ENCODE measurements at regions of chrX and their contacts with region 1.

Region 1: GRCh38 chrX:47497273-47497672 is 14.3 kb upstream of the ZNF41 start:
- DNase-seq: no peak
- ATAC-seq: no peak
- H3K4me3 ChIP-seq: no peak overlapping the region
- H3K4me3 Mint-ChIP-seq: no peak overlapping the region
- H3K27ac ChIP-seq: no peak overlapping the region
- H3K27ac Mint-ChIP-seq: no peak overlapping the region
- H3K4me1 ChIP-seq: peaks cover 9 to 16% of the 10 kb centered on the region in 2 donors
- H3K4me1 Mint-ChIP-seq: peaks cover 18% of the 10 kb centered on the region
- H3K27me3 ChIP-seq: no peaks in the 10 kb centered on the region
- H3K27me3 Mint-ChIP-seq: no peaks in the 10 kb centered on the region
- CTCF ChIP-seq: no peak

Region 2: DNA sequence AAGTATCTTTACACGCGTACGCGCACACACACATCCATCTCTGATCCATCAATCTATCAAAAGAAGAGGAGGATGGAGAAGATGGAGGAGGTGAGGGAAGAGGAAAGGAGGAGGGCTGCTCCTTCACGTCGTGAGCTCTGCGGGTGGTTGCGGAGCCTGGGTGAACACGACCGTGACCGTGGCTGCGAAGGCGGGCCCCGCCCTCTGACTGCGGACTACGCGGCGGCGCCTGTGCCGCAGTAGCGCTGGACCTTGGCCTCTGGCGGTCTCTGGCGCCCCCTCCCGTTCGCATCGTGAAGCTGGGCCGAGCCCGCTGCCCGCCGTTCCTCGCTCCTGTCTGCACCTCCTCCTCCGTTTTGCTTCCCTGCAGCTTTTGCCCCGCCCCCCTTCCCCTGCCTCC is 26.0 kb after region 1 on chrX:
- CTCF ChIA-PET with region 1: interaction called, 26 read pairs
- POLR2A ChIA-PET with region 1: interaction called, 4 read pairs
- intact Hi-C with region 1: loop called (anchors 1 kb)
- DNase-seq: peak; percentile 87
- ATAC-seq: peak; percentile 99
- H3K4me3 ChIP-seq: peak overlapping the region in 4 of 5 experiments; percentile 51 to 60 (median 57)
- H3K4me3 Mint-ChIP-seq: peak overlapping the region; percentile 71
- H3K27ac ChIP-seq: no peak overlapping the region
- H3K27ac Mint-ChIP-seq: peak overlapping the region; percentile 70
- H3K4me1 ChIP-seq: peaks cover 0 to 8% of the 10 kb centered on the region in 2 donors
- H3K4me1 Mint-ChIP-seq: peaks cover 5% of the 10 kb centered on the region
- H3K27me3 ChIP-seq: no peaks in the 10 kb centered on the region
- H3K27me3 Mint-ChIP-seq: no peaks in the 10 kb centered on the region
- CTCF ChIP-seq: peak; percentile 78

Region 3: DNA sequence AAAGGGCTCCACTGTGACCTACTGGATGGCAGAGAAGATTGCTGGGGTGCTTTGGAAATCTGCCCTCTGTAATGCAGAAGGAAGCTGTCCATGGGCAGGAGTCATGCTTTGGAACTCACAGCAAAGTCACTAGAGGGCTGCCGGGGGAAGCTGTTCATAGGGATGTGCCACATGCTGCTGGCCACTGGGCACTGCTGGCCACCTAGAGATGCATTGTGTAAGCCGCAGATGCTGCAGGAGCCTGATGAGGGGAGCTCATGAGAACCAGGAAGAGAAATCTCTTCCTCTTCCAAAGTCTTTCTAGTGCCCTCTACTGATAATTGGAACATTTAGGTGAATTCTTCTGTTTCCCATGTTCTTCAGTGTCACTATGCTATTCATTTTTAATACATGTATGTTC is 192.9 kb after region 1 on chrX:
- CTCF ChIA-PET with region 1: no interaction called
- POLR2A ChIA-PET with region 1: no interaction called
- intact Hi-C with region 1: no loop called
- DNase-seq: no peak
- ATAC-seq: no peak
- H3K4me3 ChIP-seq: no peak overlapping the region
- H3K4me3 Mint-ChIP-seq: no peak overlapping the region
- H3K27ac ChIP-seq: no peak overlapping the region
- H3K27ac Mint-ChIP-seq: no peak overlapping the region
- H3K4me1 ChIP-seq: no peaks in the 10 kb centered on the region
- H3K4me1 Mint-ChIP-seq: no peaks in the 10 kb centered on the region
- H3K27me3 ChIP-seq: peaks cover 0 to 3% (median 0%) of the 10 kb centered on the region in 4 experiments
- H3K27me3 Mint-ChIP-seq: peaks cover 10% of the 10 kb centered on the region
- CTCF ChIP-seq: no peak

Measured in B cell (primary cell).